H1 (cell line): ENCODE measurements at regions of chr1 and their contacts with region 1.

Region 1: GRCh38 chr1:85200870-85201339 is at the start of gene SYDE2:
- DNase-seq: peak; percentile 46 to 80
- H3K4me3 ChIP-seq: peak within 1 kb of the TSS; percentile 73 to 95 (median 84)
- H3K27ac ChIP-seq: peak within 1 kb of the TSS; percentile 94
- H3K4me1 ChIP-seq: peaks cover 0 to 3% (median 0%) of the 10 kb centered on the region in 4 experiments; a peak in 3 of 7 replicates
- H3K27me3 ChIP-seq: no peaks in the 10 kb centered on the region
- CTCF ChIP-seq: no peak
- EP300 ChIP-seq: no peak
- POLR2A ChIP-seq: peak in 1 of 2 experiments; percentile 41; a peak in 1 of 3 replicates
- RAD21 ChIP-seq: peak in 1 of 2 experiments; percentile 1; a peak in 1 of 4 replicates
- total RNA-seq, gene SYDE2: 12.7 and 14.6 TPM in 2 replicates

Region 2: GRCh38 chr1:85224734-85225623 is 24.1 kb after region 1 on chr1:
- CTCF ChIA-PET with region 1: interaction called, 9 read pairs
- POLR2A ChIA-PET with region 1: interaction called, 17 read pairs
- DNase-seq: peak; percentile 38 to 60
- H3K4me3 ChIP-seq: peak overlapping the region in 2 of 4 experiments; percentile 1 to 5; a peak in 2 of 8 replicates
- H3K27ac ChIP-seq: 0 out of 2 replicates have a peak overlapping the region, but pooled peaks have one; percentile 2
- H3K4me1 ChIP-seq: peaks cover 0 to 15% (median 4%) of the 10 kb centered on the region in 4 experiments; a peak in 4 of 7 replicates
- H3K27me3 ChIP-seq: no peaks in the 10 kb centered on the region
- CTCF ChIP-seq: no peak
- EP300 ChIP-seq: peak in 1 of 2 experiments; percentile 68; a peak in 1 of 3 replicates
- POLR2A ChIP-seq: no peak
- RAD21 ChIP-seq: peak in 1 of 2 experiments; percentile 22; a peak in 1 of 4 replicates

Region 3: DNA sequence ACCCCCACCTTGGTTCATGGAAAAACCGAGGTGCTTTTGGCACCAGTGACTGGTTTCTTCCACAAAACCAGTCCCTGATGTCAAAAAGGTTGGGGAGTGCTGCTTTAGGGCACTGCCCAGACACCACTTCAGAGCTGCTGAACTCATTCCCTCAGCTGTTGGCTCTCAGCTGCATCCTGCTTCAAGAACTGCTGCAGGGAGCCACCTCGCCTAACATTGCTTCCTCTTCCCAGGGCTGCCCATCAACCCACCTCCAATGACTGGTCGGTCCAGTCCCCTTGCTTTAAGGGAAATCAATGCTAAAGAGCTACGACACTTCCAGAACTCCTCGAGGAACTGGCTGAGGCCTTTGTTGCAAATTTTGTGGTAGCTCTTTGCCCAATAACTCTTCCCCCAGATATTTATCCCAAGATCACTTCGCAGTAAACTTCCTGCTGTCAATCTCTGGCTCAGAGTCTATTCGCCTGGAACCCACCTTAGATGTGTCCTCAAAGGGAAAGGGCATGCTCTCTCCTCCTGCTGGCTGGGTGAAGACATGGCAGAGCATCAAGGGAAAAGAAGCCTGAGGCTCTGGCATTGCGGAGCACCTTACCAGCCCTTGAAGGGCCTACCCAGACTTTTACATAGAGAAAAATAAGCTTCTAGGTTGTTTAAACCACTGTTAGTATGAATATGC is 29.5 kb after region 1 on chr1:
- CTCF ChIA-PET with region 1: interaction called, 9 read pairs
- POLR2A ChIA-PET with region 1: interaction called, 17 read pairs
- DNase-seq: no peak
- H3K4me3 ChIP-seq: no peak overlapping the region
- H3K27ac ChIP-seq: no peak overlapping the region
- H3K4me1 ChIP-seq: peaks cover 0 to 5% (median 2%) of the 10 kb centered on the region in 4 experiments; a peak in 4 of 7 replicates
- H3K27me3 ChIP-seq: no peaks in the 10 kb centered on the region
- CTCF ChIP-seq: peak; percentile 45 to 61 (median 60)
- EP300 ChIP-seq: no peak
- POLR2A ChIP-seq: no peak
- RAD21 ChIP-seq: peak; percentile 52 to 69